Activated CD4-positive, alpha-beta memory T cell treated with anti-CD3 and anti-CD28 coated beads, Interleukin-2, amount 10 ng/mL, durations not matched to agents 7 days and 5 days (primary cell): ENCODE measurements at regions of chr2 and their contacts with region 1.

Region 1: GRCh38 chr2:42102024-42102590 is 54.3 kb downstream of the PKDCC start:
- DNase-seq: peak; percentile 88
- H3K4me3 Mint-ChIP-seq: peak overlapping the region; percentile 65
- H3K27ac Mint-ChIP-seq: peak overlapping the region; percentile 91
- H3K4me1 Mint-ChIP-seq: peaks cover 45% of the 10 kb centered on the region
- H3K27me3 Mint-ChIP-seq: no peaks in the 10 kb centered on the region

Region 2: GRCh38 chr2:41814963-41815362 is 287.1 kb before region 1 on chr2:
- CTCF ChIA-PET with region 1: no interaction called
- POLR2A ChIA-PET with region 1: no interaction called
- DNase-seq: no peak
- H3K4me3 Mint-ChIP-seq: no peak overlapping the region
- H3K27ac Mint-ChIP-seq: no peak overlapping the region
- H3K4me1 Mint-ChIP-seq: no peaks in the 10 kb centered on the region
- H3K27me3 Mint-ChIP-seq: peaks cover 7% of the 10 kb centered on the region

Region 3: DNA sequence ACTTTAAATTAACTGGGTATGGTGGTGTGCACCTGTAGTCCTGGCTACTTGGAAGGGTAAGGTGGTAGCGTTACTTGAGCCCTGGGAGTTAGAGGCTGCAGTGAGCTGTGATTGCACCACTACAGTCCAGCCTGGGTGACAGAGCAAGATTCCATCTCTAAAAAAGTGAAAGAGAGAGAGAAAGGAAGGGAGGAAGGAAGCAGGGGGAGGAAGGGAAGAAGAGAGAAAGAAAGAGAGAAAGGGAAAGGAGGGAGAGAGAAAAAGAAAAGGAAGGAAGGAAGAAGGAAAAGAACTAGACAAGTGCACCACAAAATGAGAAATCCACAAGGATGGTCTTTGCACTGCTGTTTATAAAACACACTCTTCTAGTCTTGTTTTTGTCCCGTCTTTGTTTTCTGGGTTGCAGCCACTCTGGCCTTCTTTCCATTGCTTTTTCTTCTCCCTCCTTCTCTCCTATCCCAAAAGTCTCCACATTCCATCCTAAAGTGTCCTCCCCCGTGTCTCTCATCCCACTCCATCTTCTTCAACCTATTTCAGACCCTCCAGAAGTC is 22.3 kb before region 1 on chr2:
- CTCF ChIA-PET with region 1: no interaction called
- POLR2A ChIA-PET with region 1: no interaction called
- DNase-seq: no peak
- H3K4me3 Mint-ChIP-seq: no peak overlapping the region
- H3K27ac Mint-ChIP-seq: no peak overlapping the region
- H3K4me1 Mint-ChIP-seq: peaks cover 4% of the 10 kb centered on the region
- H3K27me3 Mint-ChIP-seq: peaks cover 28% of the 10 kb centered on the region

Region 4: DNA sequence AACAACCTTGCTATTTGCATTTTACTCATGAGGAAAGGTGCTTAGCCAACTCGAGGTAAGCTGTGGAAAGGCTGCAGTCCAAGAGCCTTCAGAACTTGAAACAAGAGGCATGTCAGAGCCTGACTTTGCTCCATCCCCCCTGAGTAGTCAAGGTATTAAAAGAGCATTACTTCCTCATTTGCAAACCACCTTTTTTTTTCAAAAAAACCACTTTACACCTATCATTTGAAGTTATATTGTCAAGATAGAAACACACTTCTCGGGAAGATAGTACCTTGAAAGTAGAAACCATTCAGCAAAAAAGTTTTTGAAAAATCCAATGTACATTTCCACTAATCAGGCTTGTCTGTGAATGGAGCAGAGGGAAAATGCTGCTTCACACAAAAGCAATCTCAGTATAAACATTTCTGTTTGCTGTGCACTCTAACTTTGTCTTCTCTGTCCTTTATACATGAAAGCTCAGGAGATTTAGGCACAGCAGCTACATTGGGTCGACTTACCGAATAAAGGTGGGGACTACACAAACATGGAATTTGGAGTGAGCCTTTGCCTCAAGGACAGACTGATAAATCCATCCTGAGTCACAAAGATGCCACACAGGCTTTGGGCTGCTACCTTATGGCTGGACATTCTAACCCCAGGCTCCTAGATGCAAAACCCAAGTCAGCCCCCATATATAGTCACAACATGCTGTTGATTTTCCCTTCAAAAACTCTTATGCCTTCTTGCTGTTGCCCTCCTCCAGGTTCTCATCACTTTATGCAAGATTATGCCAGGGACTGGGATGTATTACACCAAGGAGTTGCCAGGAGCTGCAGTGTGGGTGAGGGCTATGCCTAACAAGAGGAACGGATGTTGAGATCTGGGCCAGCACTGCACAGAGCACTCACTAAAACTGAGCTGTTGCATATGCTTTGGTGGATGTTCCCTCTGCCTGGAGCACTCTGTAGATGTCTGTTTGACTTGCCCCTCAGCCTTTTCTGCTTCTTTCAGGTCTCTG is 25.6 kb after region 1 on chr2:
- CTCF ChIA-PET with region 1: interaction called, 32 read pairs
- POLR2A ChIA-PET with region 1: interaction called, 240 read pairs
- DNase-seq: peak; percentile 45
- H3K4me3 Mint-ChIP-seq: peak overlapping the region; percentile 48
- H3K27ac Mint-ChIP-seq: peak overlapping the region; percentile 88
- H3K4me1 Mint-ChIP-seq: peaks cover 92% of the 10 kb centered on the region
- H3K27me3 Mint-ChIP-seq: no peaks in the 10 kb centered on the region

Region 5: DNA sequence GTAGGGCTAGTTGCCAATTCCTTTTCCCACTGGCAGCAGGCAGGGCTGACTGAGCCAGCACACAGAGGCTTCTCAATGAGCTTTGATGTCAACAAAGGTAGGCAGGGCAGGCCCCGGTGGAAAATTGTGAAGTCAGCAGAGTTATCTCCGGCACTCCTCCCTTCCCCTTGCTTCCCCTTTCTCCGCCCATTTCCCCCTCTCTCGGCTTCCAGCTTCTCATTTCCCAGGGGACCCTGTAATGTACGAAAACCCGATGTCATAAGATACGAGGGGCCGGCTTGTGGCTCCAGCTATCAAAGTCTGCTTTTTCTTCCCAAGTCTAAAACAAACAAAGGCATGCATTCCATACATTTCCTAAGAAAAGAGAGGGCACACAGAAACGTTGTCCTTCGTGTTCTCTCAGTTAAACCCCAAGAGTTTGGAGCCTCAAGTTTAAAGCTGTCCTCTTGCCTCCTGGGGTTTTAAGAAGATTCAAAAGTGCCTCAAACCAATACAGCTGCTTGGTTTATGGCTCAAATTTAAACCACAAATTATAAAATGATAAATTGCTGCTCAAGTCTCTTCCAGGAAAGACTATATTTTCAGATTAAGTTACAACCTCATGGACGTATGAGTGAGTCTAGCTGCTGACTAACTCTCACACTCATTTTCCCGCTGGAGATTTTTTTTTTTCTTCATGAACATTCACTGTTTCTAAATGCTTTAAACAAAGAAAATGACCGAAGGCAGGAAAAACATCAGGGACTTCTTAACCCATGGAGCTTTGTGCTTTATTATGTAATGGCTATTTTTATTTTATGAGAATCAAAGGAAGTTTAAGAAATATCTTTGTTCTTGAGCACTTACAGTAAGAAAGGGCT is 39.8 kb after region 1 on chr2:
- CTCF ChIA-PET with region 1: interaction called, 5 read pairs
- POLR2A ChIA-PET with region 1: interaction called, 169 read pairs
- DNase-seq: no peak
- H3K4me3 Mint-ChIP-seq: peak overlapping the region; percentile 46
- H3K27ac Mint-ChIP-seq: peak overlapping the region; percentile 72
- H3K4me1 Mint-ChIP-seq: peaks cover 62% of the 10 kb centered on the region
- H3K27me3 Mint-ChIP-seq: no peaks in the 10 kb centered on the region

Region 6: DNA sequence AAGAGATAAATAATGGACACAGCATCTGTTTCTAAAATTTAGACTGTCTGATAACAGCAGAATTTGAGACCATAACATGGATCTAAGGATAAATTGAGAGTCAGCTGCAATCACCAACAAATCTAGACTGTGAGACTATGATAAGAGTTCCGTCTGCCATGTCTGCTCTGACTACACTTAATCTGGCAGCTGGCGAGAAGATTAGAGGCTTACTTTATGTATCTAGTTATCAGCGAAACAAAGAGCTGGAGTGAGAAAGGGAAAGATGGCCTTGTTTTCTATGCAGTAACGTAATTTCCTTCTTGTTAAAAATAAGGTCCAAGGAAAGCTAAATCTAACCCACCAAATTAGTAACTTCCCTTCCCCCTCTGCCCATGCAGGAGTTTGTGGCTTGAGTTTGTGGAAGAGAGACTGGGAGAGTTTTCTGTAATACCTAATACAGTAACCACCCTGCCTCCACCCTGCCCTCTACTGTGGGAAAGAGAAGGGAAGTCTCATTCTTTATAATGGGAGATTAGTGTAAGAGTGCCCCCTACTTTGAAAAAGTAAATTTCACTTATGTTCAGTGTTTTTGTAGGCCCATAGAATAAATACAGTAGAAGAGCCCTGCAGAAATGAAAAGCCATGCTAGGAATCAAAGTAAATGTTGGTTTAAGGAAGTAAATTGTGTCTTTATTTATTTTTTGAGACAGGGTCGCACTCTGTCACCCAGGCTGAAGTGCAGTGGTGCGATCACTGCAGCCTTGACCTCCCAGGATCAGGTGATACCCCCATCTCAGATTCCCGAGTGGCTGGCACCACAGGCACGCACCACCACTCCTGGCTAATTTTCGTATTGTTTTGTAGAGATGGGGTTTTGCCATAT is 94.5 kb after region 1 on chr2:
- CTCF ChIA-PET with region 1: interaction called, 49 read pairs
- POLR2A ChIA-PET with region 1: interaction called, 10 read pairs
- DNase-seq: peak; percentile 31
- H3K4me3 Mint-ChIP-seq: no peak overlapping the region
- H3K27ac Mint-ChIP-seq: no peak overlapping the region
- H3K4me1 Mint-ChIP-seq: peaks cover 58% of the 10 kb centered on the region
- H3K27me3 Mint-ChIP-seq: no peaks in the 10 kb centered on the region